Gastrocnemius medialis (tissue), 4 donors: ENCODE measurements at regions of chr3 and their contacts with region 1.

Region 1: GRCh38 chr3:73848173-73848906 is 223.6 kb upstream of the PDZRN3 start:
- DNase-seq: no peak
- ATAC-seq: peak in 1 of 2 donors; percentile 52
- H3K4me3 ChIP-seq: no peak overlapping the region
- H3K27ac ChIP-seq: no peak overlapping the region
- H3K4me1 ChIP-seq: no peaks in the 10 kb centered on the region
- H3K27me3 ChIP-seq: no peaks in the 10 kb centered on the region
- CTCF ChIP-seq: peak; percentile 38 to 73 (median 56)
- POLR2A ChIP-seq: no peak

Region 2: DNA sequence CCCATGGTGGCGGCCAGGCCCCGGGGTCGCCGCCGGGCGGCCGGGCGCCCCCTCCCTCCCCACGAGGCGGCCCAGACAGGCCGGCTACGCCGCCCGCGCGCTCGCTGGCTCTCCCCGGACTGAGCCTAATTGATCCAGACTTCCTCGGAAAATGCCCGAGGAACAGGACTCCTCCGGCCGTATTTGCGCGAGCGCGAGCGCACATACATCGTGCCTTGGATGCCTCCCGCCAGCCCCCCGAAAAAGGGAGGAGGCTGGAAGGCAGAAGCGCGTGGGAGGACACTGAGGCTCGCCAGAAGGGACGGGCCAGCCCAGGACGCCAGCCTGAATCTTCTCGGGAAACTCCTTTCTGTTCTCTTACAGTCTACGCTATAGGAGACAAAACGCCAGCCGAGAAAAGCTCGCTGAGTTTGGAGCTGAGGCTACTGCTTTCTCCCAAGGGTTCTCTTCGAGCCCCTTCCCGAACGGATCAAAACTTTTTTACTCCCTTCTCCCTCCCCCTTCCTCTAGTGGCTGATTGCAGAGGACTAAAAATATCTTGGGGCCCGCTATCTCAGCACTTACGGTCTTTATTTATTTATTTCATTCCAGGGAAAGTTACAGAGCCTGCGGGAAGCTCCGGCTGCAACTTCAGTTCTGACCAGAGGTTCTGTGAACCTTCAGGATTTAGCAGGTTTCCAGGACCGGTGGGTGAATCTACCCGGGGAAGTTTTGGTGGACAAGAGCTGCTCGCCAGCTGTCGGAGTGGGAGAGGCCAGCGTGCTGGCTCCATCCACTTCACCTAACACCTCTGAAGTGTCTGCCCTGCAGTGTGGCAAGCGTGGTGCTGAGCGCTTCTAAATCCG is 223.3 kb before region 1 on chr3 and contains the start of gene PDZRN3:
- in situ Hi-C with region 1: loop called in 3 of 4 experiments (anchors 10 to 25 kb)
- intact Hi-C with region 1: loop called (anchors 2 kb)
- DNase-seq: peak; percentile 41 to 44
- ATAC-seq: peak; percentile 46 to 48
- H3K4me3 ChIP-seq: peak within 1 kb of the TSS; percentile 71 to 93 (median 78)
- H3K27ac ChIP-seq: peak within 1 kb of the TSS; percentile 89 to 94 (median 92)
- H3K4me1 ChIP-seq: peaks cover 34 to 56% of the 10 kb centered on the region in 2 donors
- H3K27me3 ChIP-seq: no peaks in the 10 kb centered on the region
- CTCF ChIP-seq: peak in 1 of 5 experiments; percentile 3
- POLR2A ChIP-seq: peak; percentile 64 to 83
- total RNA-seq, gene PDZRN3: 9.1 to 30.3 (median 24.7) TPM

Region 3: GRCh38 chr3:73786321-73786807 is 62.0 kb before region 1 on chr3:
- in situ Hi-C with region 1: no loop called
- intact Hi-C with region 1: loop called (anchors 5 kb)
- DNase-seq: peak; percentile 30 to 59
- ATAC-seq: peak; percentile 77 to 94
- H3K4me3 ChIP-seq: no peak overlapping the region
- H3K27ac ChIP-seq: no peak overlapping the region
- H3K4me1 ChIP-seq: peaks cover under 1 to 28% of the 10 kb centered on the region in 2 donors
- H3K27me3 ChIP-seq: no peaks in the 10 kb centered on the region
- CTCF ChIP-seq: no peak
- POLR2A ChIP-seq: no peak

Region 4: DNA sequence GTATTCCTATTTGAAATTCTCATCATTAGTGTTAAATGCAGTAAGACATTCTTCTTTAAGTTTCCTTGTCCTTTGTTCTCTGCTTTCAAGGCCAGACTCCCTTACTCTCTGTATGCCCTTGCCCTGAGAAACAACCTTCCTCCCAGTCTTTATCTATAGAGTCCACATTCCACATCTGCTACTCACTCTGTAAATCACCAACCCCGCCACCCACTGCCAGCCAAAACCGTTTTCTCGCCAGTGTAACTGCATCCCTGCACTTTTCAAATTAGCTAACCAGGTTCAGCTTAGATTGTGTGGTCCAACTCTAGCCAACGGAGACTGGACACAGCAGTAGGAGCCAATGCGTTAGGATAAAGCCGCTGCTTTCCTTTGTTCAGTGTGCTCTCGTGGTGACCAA is 178.8 kb after region 1 on chr3:
- in situ Hi-C with region 1: no loop called
- intact Hi-C with region 1: no loop called
- DNase-seq: no peak
- ATAC-seq: no peak
- H3K4me3 ChIP-seq: no peak overlapping the region
- H3K27ac ChIP-seq: no peak overlapping the region
- H3K4me1 ChIP-seq: no peaks in the 10 kb centered on the region
- H3K27me3 ChIP-seq: no peaks in the 10 kb centered on the region
- CTCF ChIP-seq: no peak
- POLR2A ChIP-seq: no peak

Region 5: DNA sequence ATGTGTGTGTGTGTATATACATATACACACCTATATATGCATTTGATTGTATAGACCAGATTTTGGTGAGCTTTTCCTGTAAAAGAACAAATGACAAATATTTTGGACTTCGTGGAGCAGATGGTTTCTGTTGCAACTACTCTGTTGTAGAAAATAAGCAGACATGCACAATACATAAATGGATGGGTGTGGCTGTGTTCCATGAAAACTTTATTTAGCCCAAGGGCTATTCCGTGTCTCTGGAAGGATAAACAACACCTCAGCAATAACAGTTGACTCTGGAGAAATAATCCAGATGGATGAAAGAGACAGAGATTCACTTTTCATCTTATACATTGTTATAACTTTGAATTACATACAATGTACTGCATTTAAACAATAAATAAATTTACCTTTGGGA is 324.8 kb after region 1 on chr3:
- in situ Hi-C with region 1: no loop called
- intact Hi-C with region 1: no loop called
- DNase-seq: no peak
- ATAC-seq: no peak
- H3K4me3 ChIP-seq: no peak overlapping the region
- H3K27ac ChIP-seq: no peak overlapping the region
- H3K4me1 ChIP-seq: no peaks in the 10 kb centered on the region
- H3K27me3 ChIP-seq: no peaks in the 10 kb centered on the region
- CTCF ChIP-seq: no peak
- POLR2A ChIP-seq: no peak